Common myeloid progenitor, CD34-positive (primary cell): ENCODE measurements at regions of chrX and their contacts with region 1.

Region 1: GRCh38 chrX:23901805-23902204 is 5.9 kb downstream of the APOO start:
- DNase-seq: peak; percentile 76 to 88 (median 85)
- H3K4me3 ChIP-seq: no peak overlapping the region
- H3K27ac ChIP-seq: no peak overlapping the region
- H3K4me1 ChIP-seq: peaks cover 0 to 22% (median 8%) of the 10 kb centered on the region in 4 experiments
- H3K27me3 ChIP-seq: peaks cover 0 to 5% (median 0%) of the 10 kb centered on the region in 5 experiments

Region 2: GRCh38 chrX:23465105-23465791 is 436.6 kb before region 1 on chrX:
- CTCF ChIA-PET with region 1: no interaction called
- POLR2A ChIA-PET with region 1: no interaction called
- DNase-seq: no peak
- H3K4me3 ChIP-seq: no peak overlapping the region
- H3K27ac ChIP-seq: no peak overlapping the region
- H3K4me1 ChIP-seq: no peaks in the 10 kb centered on the region
- H3K27me3 ChIP-seq: no peaks in the 10 kb centered on the region

Region 3: GRCh38 chrX:23699636-23700194 is 202.1 kb before region 1 on chrX:
- CTCF ChIA-PET with region 1: interaction called, 112 read pairs
- POLR2A ChIA-PET with region 1: no interaction called
- DNase-seq: peak; percentile 64 to 89 (median 82)
- H3K4me3 ChIP-seq: peak overlapping the region in 6 of 7 experiments; percentile 48 to 76 (median 58)
- H3K27ac ChIP-seq: peak overlapping the region in 1 of 2 experiments; percentile 49
- H3K4me1 ChIP-seq: peaks cover 0 to 5% (median 1%) of the 10 kb centered on the region in 4 experiments
- H3K27me3 ChIP-seq: no peaks in the 10 kb centered on the region

Region 4: GRCh38 chrX:23742697-23743622 is 158.8 kb before region 1 on chrX and contains the start of gene ACOT9:
- CTCF ChIA-PET with region 1: interaction called, 14 read pairs
- POLR2A ChIA-PET with region 1: no interaction called
- DNase-seq: peak; percentile 81 to 93 (median 90)
- H3K4me3 ChIP-seq: peak within 1 kb of the TSS; percentile 53 to 84 (median 71)
- H3K27ac ChIP-seq: peak within 1 kb of the TSS; percentile 40 to 73
- H3K4me1 ChIP-seq: peaks cover 0 to 8% (median 2%) of the 10 kb centered on the region in 4 experiments
- H3K27me3 ChIP-seq: peaks cover 0 to 7% (median 0%) of the 10 kb centered on the region in 5 experiments

Region 5: DNA sequence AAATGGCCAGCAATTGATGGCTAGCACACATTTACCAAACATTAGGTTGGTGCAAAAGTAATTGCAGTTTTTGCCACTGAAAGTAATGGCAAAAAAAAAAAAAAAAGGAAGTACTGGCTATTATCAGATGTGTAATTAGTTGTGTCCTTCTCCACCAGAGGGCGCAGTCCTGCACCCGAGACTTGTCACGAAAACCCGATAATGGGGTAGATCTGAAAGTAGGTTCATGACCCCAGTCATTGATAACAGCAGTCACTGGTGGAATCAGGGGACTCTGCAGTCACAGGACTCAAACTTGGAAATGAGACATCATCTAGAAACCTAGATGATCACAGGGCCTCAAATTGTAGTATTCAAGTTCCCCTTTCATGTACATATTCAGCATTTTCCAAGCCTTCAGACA is 145.6 kb before region 1 on chrX:
- CTCF ChIA-PET with region 1: interaction called, 26 read pairs
- POLR2A ChIA-PET with region 1: no interaction called
- DNase-seq: peak; percentile 77 to 81 (median 80)
- H3K4me3 ChIP-seq: peak overlapping the region in 1 of 7 experiments; percentile 42
- H3K27ac ChIP-seq: no peak overlapping the region
- H3K4me1 ChIP-seq: peaks cover 0 to 2% (median under 1%) of the 10 kb centered on the region in 4 experiments
- H3K27me3 ChIP-seq: no peaks in the 10 kb centered on the region

Region 6: GRCh38 chrX:23782863-23783568 is 118.8 kb before region 1 on chrX and contains the start of gene SAT1:
- CTCF ChIA-PET with region 1: interaction called, 16 read pairs
- POLR2A ChIA-PET with region 1: interaction called, 19 read pairs
- DNase-seq: peak; percentile 94 to 97 (median 96)
- H3K4me3 ChIP-seq: peak within 1 kb of the TSS; percentile 58 to 88 (median 80)
- H3K27ac ChIP-seq: peak within 1 kb of the TSS; percentile 85 to 92
- H3K4me1 ChIP-seq: peaks cover 7 to 23% (median 14%) of the 10 kb centered on the region in 4 experiments
- H3K27me3 ChIP-seq: no peaks in the 10 kb centered on the region